ENCODE measurements at regions of chr10 and their contacts with region 1.

Region 1: DNA sequence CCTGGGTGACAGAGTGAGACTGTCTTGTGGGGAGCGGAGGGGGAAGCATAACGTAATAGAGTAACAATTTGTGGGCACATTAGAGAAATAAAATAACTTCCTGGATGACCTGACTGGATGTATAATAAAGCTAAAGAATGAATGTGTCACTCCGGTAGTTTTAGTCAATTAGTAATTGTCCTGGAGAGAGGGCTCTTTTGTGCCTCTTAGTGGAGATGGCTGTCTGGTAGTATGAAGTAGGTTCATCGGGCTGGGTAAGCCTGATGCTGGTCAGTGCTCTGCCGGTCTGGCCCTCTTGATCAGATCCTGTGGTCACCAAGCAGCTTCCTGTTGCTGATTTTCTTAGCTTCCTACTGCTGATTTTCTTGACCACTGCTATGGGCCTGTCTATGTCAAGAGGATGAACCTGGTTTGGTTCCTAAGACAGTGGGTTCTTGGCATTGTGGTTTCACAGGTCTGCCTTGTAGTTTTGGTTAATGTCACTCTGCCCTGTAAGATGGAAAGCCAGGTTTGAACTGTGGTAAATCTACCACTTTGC is 34.1 kb downstream of the ZRANB1 start:
- DNase-seq: no peak
- H3K4me3 ChIP-seq: no peak overlapping the region
- H3K27ac ChIP-seq: no peak overlapping the region
- H3K4me1 ChIP-seq: peaks cover 9 to 27% of the 10 kb centered on the region in 2 donors
- H3K27me3 ChIP-seq: no peaks in the 10 kb centered on the region
- CTCF ChIP-seq: no peak
- POLR2A ChIP-seq: no peak

Region 2: GRCh38 chr10:124921261-124921660 is 54.8 kb before region 1 on chr10:
- intact Hi-C with region 1: loop called in 1 of 2 experiments (anchors 10 kb)
- DNase-seq: no peak
- H3K4me3 ChIP-seq: no peak overlapping the region
- H3K27ac ChIP-seq: no peak overlapping the region
- H3K4me1 ChIP-seq: peaks cover 18 to 59% of the 10 kb centered on the region in 2 donors
- H3K27me3 ChIP-seq: no peaks in the 10 kb centered on the region
- CTCF ChIP-seq: no peak
- POLR2A ChIP-seq: no peak

Region 3: DNA sequence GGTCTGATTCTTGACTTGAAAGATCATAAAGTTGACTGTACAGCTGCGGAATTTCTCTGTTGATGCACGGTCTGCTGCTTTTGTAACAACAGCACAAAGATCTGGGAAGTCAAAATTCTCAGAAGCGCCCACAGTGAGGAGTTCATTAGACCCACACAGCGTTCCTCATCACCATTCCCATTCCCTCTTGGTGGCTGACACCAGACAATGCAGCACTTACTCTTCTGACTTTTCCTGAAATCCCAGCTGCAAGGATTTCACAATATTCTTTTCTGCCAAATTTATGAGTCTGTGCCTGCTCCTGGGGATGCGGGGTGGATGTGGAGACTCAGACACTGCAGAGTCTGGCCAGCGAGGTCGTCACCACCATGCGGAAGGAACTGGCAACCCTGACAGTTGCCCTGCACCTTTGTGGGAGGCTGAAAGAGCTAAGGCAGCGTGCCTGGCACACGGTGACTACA is 1154.3 kb after region 1 on chr10:
- intact Hi-C with region 1: no loop called
- DNase-seq: peak in 6 of 7 donors; percentile 22 to 53 (median 32)
- H3K4me3 ChIP-seq: no peak overlapping the region
- H3K27ac ChIP-seq: peak overlapping the region in 1 of 5 donors; percentile 45
- H3K4me1 ChIP-seq: peaks cover 0 to 14% of the 10 kb centered on the region in 2 donors
- H3K27me3 ChIP-seq: no peaks in the 10 kb centered on the region
- CTCF ChIP-seq: no peak
- POLR2A ChIP-seq: no peak

Measured in adrenal gland (tissue), 19 donors.